ENCODE measurements at regions of chr11 and their contacts with region 1.

Region 1: GRCh38 chr11:78564490-78565467 is 9.9 kb downstream of the NARS2 start:
- DNase-seq: peak; percentile 44
- H3K4me3 Mint-ChIP-seq: no peak overlapping the region
- H3K27ac Mint-ChIP-seq: peak overlapping the region; percentile 71
- H3K4me1 Mint-ChIP-seq: peaks cover 50% of the 10 kb centered on the region
- H3K27me3 Mint-ChIP-seq: no peaks in the 10 kb centered on the region

Region 2: GRCh38 chr11:78045851-78046485 is 518.8 kb before region 1 on chr11:
- CTCF ChIA-PET with region 1: interaction called, 14 read pairs
- POLR2A ChIA-PET with region 1: no interaction called
- DNase-seq: peak; percentile 73
- H3K4me3 Mint-ChIP-seq: peak overlapping the region; percentile 14
- H3K27ac Mint-ChIP-seq: no peak overlapping the region
- H3K4me1 Mint-ChIP-seq: peaks cover 23% of the 10 kb centered on the region
- H3K27me3 Mint-ChIP-seq: peaks cover 4% of the 10 kb centered on the region

Region 3: GRCh38 chr11:78188286-78189173 is 376.2 kb before region 1 on chr11 and contains the starts of genes KCTD21 and USP35:
- CTCF ChIA-PET with region 1: interaction called, 11 read pairs
- POLR2A ChIA-PET with region 1: interaction called, 4 read pairs
- DNase-seq: peak; percentile 93
- H3K4me3 Mint-ChIP-seq: peak within 1 kb of the TSS; percentile 98
- H3K27ac Mint-ChIP-seq: peak within 1 kb of the TSS; percentile 82
- H3K4me1 Mint-ChIP-seq: peaks cover 48% of the 10 kb centered on the region
- H3K27me3 Mint-ChIP-seq: no peaks in the 10 kb centered on the region
- total RNA-seq, gene KCTD21: 7.5 to 9.3 TPM
- total RNA-seq, gene USP35: 10.8 to 12.1 TPM

Region 4: DNA sequence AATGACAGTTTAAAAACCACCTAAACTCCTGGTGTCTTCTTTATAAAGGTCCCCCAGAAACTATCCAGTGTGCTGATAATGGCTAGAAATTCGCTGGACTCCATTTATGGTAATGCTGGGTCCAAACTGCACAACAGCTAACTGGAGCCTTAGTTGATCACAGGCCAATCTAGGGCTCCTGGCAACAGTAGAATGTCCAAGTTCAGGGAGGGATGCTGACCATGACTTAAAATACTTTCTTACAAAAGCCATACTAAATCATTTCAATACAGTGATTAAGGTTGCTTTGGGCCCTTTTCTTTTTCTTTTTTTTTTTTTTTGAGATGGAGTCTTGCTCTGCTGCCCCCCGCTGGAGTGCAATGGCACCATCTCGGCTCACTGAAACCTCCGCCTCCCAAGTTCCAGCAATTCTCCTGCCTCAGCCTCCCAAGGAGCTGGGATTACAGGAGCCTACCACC is 132.7 kb before region 1 on chr11:
- CTCF ChIA-PET with region 1: interaction called, 15 read pairs
- POLR2A ChIA-PET with region 1: interaction called, 5 read pairs
- DNase-seq: no peak
- H3K4me3 Mint-ChIP-seq: no peak overlapping the region
- H3K27ac Mint-ChIP-seq: no peak overlapping the region
- H3K4me1 Mint-ChIP-seq: peaks cover 31% of the 10 kb centered on the region
- H3K27me3 Mint-ChIP-seq: no peaks in the 10 kb centered on the region

Region 5: DNA sequence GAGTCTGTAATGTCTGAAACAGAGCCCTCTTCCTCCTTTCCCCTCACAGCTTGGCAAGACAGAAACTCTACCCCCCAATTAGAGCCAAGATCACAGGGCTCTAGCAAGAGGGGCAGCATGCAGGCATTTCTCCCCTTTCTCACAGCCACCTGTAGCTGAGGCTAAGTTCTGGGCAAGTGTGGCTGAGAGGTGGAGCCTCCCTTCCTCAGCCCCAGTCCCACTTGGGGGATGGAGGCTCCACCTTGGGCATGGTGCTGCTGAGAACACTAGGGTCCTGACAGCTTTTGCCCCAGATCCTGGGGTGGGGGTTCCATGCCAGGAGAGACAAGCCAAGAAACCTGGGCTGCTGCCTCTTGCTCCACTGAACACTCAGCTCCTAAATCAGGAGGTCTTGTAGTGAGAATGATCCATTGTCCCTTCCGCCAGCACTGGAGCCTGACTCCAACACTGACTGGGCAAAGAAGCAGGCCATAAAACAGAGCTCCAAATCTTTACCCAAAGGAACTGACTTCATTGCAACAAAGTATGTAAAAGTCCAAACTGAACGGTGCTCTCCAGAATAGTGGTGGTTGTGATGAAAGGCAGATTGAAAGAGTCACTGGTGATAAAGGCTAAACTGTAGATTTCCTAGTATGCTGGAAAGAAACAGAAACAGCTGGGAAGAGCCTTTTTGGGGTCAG is 15.7 kb before region 1 on chr11:
- CTCF ChIA-PET with region 1: interaction called, 12 read pairs
- POLR2A ChIA-PET with region 1: no interaction called
- DNase-seq: no peak
- H3K4me3 Mint-ChIP-seq: no peak overlapping the region
- H3K27ac Mint-ChIP-seq: no peak overlapping the region
- H3K4me1 Mint-ChIP-seq: peaks cover 15% of the 10 kb centered on the region
- H3K27me3 Mint-ChIP-seq: no peaks in the 10 kb centered on the region

Region 6: DNA sequence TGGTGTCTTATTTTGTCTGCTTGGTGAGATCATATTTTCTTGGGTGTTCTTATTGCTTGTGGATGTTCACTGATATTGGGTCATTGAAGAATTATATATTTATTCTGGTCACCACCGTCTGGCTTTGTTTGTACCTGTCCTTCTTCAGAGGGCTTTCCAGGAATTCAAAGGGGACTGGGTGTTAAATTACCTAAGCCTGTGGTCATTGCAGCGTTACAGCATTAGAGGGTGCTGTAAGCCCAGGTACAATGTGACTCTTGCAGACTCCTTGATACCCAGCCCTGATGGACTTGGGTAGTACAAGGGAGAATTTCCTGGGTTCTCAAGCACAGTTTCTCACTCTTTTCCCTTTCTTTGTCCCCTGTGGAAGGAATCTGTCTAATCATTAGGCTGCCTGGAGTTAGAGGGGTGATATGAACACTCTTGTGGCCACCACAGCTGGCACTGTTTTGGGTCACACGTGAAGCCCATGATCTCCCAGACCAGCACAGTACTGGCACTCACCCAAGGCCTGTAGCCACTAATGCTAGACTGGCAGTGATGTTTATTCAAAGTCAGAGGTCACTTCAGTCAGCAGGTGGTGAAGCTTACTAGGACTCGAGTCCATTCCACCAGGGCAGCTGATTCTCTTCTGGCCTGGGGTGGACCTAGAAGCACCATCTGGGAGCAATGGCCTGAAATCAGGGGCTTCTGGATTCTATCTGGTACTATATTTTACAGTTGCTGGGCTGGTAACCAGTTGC is 66.0 kb after region 1 on chr11:
- CTCF ChIA-PET with region 1: no interaction called
- POLR2A ChIA-PET with region 1: no interaction called
- DNase-seq: no peak
- H3K4me3 Mint-ChIP-seq: no peak overlapping the region
- H3K27ac Mint-ChIP-seq: no peak overlapping the region
- H3K4me1 Mint-ChIP-seq: peaks cover 4% of the 10 kb centered on the region
- H3K27me3 Mint-ChIP-seq: peaks cover 12% of the 10 kb centered on the region

Region 7: DNA sequence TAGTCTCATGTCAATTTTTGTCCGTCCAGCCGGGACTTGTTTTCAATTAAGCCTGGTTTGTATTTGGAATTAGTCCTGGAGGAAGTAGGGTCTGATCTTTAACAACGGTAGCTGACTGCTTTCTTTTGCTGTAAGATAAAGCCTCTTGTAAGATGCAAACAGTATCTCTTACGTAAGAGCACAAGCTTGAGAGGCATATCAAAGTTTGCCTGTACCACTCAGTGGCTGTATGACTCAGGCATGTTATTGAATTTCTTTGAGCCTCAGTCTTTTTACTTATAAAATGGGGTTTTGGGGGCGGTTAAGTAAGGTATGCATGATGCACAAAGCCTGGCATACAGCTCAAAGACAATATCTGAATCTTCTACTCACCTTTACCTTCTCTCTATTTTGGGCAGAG is 208.3 kb after region 1 on chr11:
- CTCF ChIA-PET with region 1: no interaction called
- POLR2A ChIA-PET with region 1: no interaction called
- DNase-seq: no peak
- H3K4me3 Mint-ChIP-seq: no peak overlapping the region
- H3K27ac Mint-ChIP-seq: no peak overlapping the region
- H3K4me1 Mint-ChIP-seq: no peaks in the 10 kb centered on the region
- H3K27me3 Mint-ChIP-seq: no peaks in the 10 kb centered on the region